Activated CD4-positive, alpha-beta T cell treated with anti-CD3 and anti-CD28 coated beads for 36 hours (primary cell): ENCODE measurements at regions of chr6 and their contacts with region 1.

Region 1: GRCh38 chr6:17706580-17707370 is at the start of gene NUP153:
- DNase-seq: peak; percentile 99
- ATAC-seq: peak; percentile 70
- H3K4me3 Mint-ChIP-seq: peak within 1 kb of the TSS; percentile 86
- H3K27ac Mint-ChIP-seq: peak within 1 kb of the TSS; percentile 99
- H3K4me1 Mint-ChIP-seq: peaks cover 27% of the 10 kb centered on the region
- H3K27me3 Mint-ChIP-seq: no peaks in the 10 kb centered on the region
- total RNA-seq, gene NUP153: 81.0 to 99.8 TPM

Region 2: GRCh38 chr6:16128759-16129622 is 1577.8 kb before region 1 on chr6 and contains the start of gene MYLIP:
- CTCF ChIA-PET with region 1: no interaction called
- POLR2A ChIA-PET with region 1: no interaction called
- intact Hi-C with region 1: loop called in 1 of 2 experiments (anchors 5 kb)
- DNase-seq: peak; percentile 98
- ATAC-seq: peak; percentile 82
- H3K4me3 Mint-ChIP-seq: peak within 1 kb of the TSS; percentile 90
- H3K27ac Mint-ChIP-seq: peak within 1 kb of the TSS; percentile 86
- H3K4me1 Mint-ChIP-seq: peaks cover 24% of the 10 kb centered on the region
- H3K27me3 Mint-ChIP-seq: no peaks in the 10 kb centered on the region
- total RNA-seq, gene MYLIP: 9.2 to 10.6 TPM

Region 3: DNA sequence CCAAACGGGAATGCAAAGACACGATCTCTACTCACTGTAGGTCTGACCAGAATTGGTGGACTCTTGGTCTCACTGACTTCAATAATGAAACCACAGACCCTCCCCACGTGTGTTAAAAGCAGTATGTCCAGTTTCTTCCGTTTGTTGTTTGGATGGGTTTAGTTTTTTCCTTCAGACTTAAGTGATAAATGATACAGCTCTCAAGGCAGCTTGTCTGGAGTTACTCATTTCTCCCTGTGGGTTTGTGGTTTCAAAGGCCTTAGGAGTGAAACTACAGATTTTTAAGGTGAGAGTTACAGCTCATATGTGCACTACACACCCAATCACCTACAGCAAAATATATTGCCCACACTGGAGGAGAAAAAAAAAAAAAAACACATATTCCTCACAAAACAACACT is 691.6 kb before region 1 on chr6:
- CTCF ChIA-PET with region 1: no interaction called
- POLR2A ChIA-PET with region 1: no interaction called
- intact Hi-C with region 1: loop called in 1 of 2 experiments (anchors 2 kb)
- DNase-seq: peak; percentile 47
- ATAC-seq: peak; percentile 92
- H3K4me3 Mint-ChIP-seq: peak overlapping the region; percentile 36
- H3K27ac Mint-ChIP-seq: peak overlapping the region; percentile 38
- H3K4me1 Mint-ChIP-seq: peaks cover 17% of the 10 kb centered on the region
- H3K27me3 Mint-ChIP-seq: peaks cover 27% of the 10 kb centered on the region

Region 4: DNA sequence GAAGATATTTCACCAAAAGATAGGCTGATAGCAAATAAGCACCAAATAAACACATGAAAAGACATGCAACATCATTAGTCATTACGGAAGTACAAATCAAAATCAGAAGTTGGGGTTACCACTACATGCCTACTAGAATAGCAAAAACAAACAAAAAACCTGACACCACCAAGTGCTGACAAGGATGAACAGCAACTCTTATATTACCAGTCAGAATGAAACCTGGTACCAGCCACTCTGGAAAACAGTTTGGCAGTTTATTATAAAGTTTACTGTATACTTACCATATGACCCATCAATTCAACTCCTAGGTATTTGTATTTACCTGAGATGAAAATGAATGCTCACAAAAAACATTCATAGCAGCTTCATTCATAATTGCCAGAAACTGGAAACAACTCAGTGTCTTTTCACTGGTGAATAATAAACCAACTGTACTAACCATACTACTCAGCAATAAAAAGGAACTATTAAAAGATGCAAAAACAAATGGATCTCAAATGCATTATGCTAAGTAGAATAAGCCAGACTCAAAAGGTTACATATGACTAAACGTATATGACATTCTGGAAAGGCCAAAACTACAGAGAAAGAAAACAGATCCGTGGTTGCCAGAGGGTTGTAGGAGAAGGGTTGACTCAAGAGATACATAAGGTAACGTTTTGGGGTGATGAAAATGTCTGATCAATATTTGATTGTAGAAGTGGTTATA is 33.1 kb before region 1 on chr6:
- CTCF ChIA-PET with region 1: interaction called, 7 read pairs
- POLR2A ChIA-PET with region 1: no interaction called
- intact Hi-C with region 1: loop called in 1 of 2 experiments (anchors 2 kb)
- DNase-seq: peak; percentile 30
- ATAC-seq: peak; percentile 89
- H3K4me3 Mint-ChIP-seq: no peak overlapping the region
- H3K27ac Mint-ChIP-seq: peak overlapping the region; percentile 63
- H3K4me1 Mint-ChIP-seq: peaks cover 32% of the 10 kb centered on the region
- H3K27me3 Mint-ChIP-seq: no peaks in the 10 kb centered on the region

Region 5: GRCh38 chr6:18115356-18115755 is 408.6 kb after region 1 on chr6:
- CTCF ChIA-PET with region 1: no interaction called
- POLR2A ChIA-PET with region 1: no interaction called
- intact Hi-C with region 1: loop called in 1 of 2 experiments (anchors 1 kb)
- DNase-seq: peak; percentile 8
- ATAC-seq: peak; percentile 87
- H3K4me3 Mint-ChIP-seq: no peak overlapping the region
- H3K27ac Mint-ChIP-seq: no peak overlapping the region
- H3K4me1 Mint-ChIP-seq: peaks cover 12% of the 10 kb centered on the region
- H3K27me3 Mint-ChIP-seq: peaks cover 51% of the 10 kb centered on the region

Region 6: GRCh38 chr6:18264219-18264922 is 557.6 kb after region 1 on chr6 and contains the start of gene DEK:
- CTCF ChIA-PET with region 1: no interaction called
- POLR2A ChIA-PET with region 1: no interaction called
- intact Hi-C with region 1: loop called (anchors 1 to 5 kb)
- DNase-seq: peak; percentile 91
- ATAC-seq: peak; percentile 55
- H3K4me3 Mint-ChIP-seq: peak within 1 kb of the TSS; percentile 93
- H3K27ac Mint-ChIP-seq: peak within 1 kb of the TSS; percentile 99
- H3K4me1 Mint-ChIP-seq: peaks cover 48% of the 10 kb centered on the region
- H3K27me3 Mint-ChIP-seq: no peaks in the 10 kb centered on the region
- total RNA-seq, gene DEK: 201 to 273 TPM